ENCODE measurements at regions of chr11 and their contacts with region 1.

Region 1: GRCh38 chr11:113835306-113835705 is 40.1 kb downstream of the USP28 start:
- DNase-seq: no peak
- H3K4me3 Mint-ChIP-seq: no peak overlapping the region
- H3K27ac Mint-ChIP-seq: no peak overlapping the region
- H3K4me1 Mint-ChIP-seq: no peaks in the 10 kb centered on the region
- H3K27me3 Mint-ChIP-seq: no peaks in the 10 kb centered on the region

Region 2: GRCh38 chr11:113849713-113850112 is 14.4 kb after region 1 on chr11:
- intact Hi-C with region 1: loop called (anchors 2 kb)
- DNase-seq: no peak
- H3K4me3 Mint-ChIP-seq: no peak overlapping the region
- H3K27ac Mint-ChIP-seq: no peak overlapping the region
- H3K4me1 Mint-ChIP-seq: no peaks in the 10 kb centered on the region
- H3K27me3 Mint-ChIP-seq: no peaks in the 10 kb centered on the region

Measured in activated T-helper 1 cell treated with anti-CD3 and anti-CD28 coated beads, Interleukin-12 subunit alpha, Interleukin-12 subunit beta, Interleukin-2, Interleukin-4 antibody, amounts not matched to agents 30 ng/mL and 10 ng/mL and 1 ng/mL, durations not matched to agents 14 hours and 24 hours and 36 hours (primary cell).